Dorsolateral prefrontal cortex (tissue), 120 donors: ENCODE measurements at regions of chr5 and their contacts with region 1.

Region 1: DNA sequence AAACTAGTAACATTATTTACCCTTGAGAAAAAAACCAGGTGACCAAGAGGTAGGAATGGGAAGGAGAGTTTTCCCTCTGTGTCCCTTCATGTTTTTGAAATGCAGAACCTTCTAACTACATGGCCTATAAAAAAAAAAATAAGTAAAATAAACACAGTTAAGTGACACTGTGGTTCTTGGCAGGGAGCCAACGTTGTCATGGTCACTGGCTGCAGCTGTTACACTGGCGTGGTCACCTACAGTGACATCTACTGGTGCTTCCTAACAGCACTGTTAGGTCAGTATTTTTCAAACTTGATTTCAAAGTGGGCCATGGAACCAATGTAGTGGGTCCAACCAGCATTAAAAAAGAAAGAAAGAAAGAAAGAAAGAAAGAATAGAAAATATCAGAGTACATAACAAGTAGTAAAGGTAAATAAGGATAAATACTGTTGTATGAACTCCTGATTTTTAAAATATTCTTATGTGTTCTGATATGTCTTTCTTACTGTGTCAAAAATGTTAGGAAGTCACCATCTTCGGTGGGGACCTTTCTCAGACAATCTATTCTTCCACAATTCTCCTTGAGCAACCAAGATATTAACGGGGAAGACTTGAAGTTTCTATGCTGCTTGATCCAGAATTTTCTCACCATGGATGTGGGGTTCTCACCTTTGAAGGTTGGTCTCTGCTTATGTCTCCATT is 59.1 kb upstream of the PJA2 start:
- DNase-seq: peak; percentile 54 to 93 (median 88)
- H3K4me3 ChIP-seq: no peak overlapping the region
- H3K27ac ChIP-seq: peak overlapping the region in 6 of 59 donors; percentile 14 to 38 (median 34)
- H3K27me3 ChIP-seq: no peaks in the 10 kb centered on the region
- CTCF ChIP-seq: peak; percentile 57 to 91 (median 81)

Region 2: DNA sequence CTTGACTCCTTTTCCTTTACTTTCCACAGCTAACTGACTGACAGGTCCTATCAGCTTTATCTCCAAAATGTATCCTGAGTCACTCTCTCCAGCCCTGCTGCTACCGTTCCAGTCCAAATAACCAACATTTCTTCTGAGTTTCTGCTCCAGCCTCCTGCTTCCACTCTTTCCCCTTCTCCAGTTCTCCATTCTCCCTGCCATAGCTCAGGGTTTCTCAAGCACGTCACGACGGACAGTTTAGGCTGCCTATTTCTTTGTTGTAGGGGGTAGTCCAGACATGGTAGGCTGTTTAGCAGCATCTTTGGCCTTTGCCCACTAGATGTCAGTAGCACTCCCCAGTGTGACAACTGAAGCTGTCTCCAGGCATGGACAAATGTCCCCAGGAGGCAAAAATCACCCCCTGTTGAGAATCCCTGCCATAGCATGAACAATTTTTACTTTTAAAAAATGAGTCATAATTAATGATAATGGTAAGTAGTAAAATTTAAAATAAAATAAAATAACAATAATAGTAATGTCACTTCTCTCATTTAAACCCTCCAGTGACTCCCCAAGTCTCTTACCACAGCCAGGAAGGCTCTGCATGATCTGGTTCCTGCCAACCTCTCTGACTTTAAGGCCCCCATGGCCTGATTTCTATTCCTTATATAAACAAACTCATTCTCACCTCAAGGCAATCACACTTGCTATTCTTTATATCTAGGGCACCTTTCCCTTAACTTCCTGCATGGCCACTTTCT is 826.5 kb before region 1 on chr5:
- intact Hi-C with region 1: loop called in 1 of 2 experiments (anchors 10 kb)
- DNase-seq: peak in 8 of 10 donors; percentile 41 to 77 (median 58)
- H3K4me3 ChIP-seq: peak overlapping the region in 16 of 59 donors; percentile 1 to 42 (median 26)
- H3K27ac ChIP-seq: no peak overlapping the region
- H3K27me3 ChIP-seq: no peaks in the 10 kb centered on the region
- CTCF ChIP-seq: peak; percentile 36 to 86 (median 78)

Region 3: GRCh38 chr5:108670591-108671289 is 798.1 kb before region 1 on chr5:
- intact Hi-C with region 1: loop called in 1 of 2 experiments (anchors 10 kb)
- DNase-seq: peak in 6 of 10 donors; percentile 22 to 58 (median 54)
- H3K4me3 ChIP-seq: no peak overlapping the region
- H3K27ac ChIP-seq: peak overlapping the region in 14 of 59 donors; percentile 6 to 51 (median 29)
- H3K27me3 ChIP-seq: no peaks in the 10 kb centered on the region
- CTCF ChIP-seq: no peak

Region 4: DNA sequence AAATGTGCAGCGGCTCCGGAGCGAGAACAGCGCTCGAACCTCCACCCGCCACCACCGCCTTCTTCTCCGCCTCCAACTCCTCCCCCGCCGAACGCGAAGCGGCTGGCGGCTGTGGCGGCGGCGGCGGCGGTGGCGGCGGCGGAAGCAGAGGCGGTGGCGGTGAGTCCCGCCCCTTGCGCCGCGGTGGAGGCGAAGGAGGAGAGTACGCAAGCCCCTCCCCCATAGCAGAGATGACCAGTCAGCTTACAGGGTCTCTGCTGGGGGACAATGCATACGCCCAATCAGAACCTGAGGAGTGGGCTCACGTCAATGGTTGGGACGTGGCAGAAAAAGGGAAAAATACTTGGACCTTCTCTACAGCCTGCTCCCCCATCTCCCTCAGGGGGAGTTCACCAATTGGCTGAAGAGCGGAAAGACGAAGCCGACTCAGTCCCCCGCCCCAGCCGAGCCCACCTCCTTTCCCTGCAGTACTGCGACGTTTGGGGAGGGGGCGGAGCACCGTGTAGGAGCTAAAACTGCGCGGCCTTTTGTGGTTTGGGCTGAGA is 59.0 kb before region 1 on chr5 and contains the start of gene PJA2:
- intact Hi-C with region 1: loop called in 1 of 2 experiments (anchors 2 kb)
- DNase-seq: peak; percentile 89 to 99 (median 97)
- H3K4me3 ChIP-seq: peak within 1 kb of the TSS; percentile 66 to 98 (median 86)
- H3K27ac ChIP-seq: peak within 1 kb of the TSS; percentile 84 to 100 (median 99)
- H3K27me3 ChIP-seq: no peaks in the 10 kb centered on the region
- CTCF ChIP-seq: peak in 42 of 56 donors; percentile 8 to 58 (median 38)
- total RNA-seq, gene PJA2: 116 to 427 (median 298) TPM

Region 5: GRCh38 chr5:109630093-109630492 is 161.2 kb after region 1 on chr5:
- intact Hi-C with region 1: no loop called
- DNase-seq: no peak
- H3K4me3 ChIP-seq: peak overlapping the region in 1 of 59 donors; percentile 20
- H3K27ac ChIP-seq: peak overlapping the region in 42 of 59 donors; percentile 1 to 82 (median 50)
- H3K27me3 ChIP-seq: no peaks in the 10 kb centered on the region
- CTCF ChIP-seq: no peak